ENCODE measurements at regions of chr7 and their contacts with region 1.

Region 1: GRCh38 chr7:150668472-150668911 is 17.0 kb upstream of the GIMAP2 start:
- DNase-seq: peak; percentile 67
- H3K4me3 Mint-ChIP-seq: peak overlapping the region; percentile 31
- H3K27ac Mint-ChIP-seq: peak overlapping the region; percentile 92
- H3K4me1 Mint-ChIP-seq: peaks cover 71% of the 10 kb centered on the region
- H3K27me3 Mint-ChIP-seq: no peaks in the 10 kb centered on the region

Region 2: DNA sequence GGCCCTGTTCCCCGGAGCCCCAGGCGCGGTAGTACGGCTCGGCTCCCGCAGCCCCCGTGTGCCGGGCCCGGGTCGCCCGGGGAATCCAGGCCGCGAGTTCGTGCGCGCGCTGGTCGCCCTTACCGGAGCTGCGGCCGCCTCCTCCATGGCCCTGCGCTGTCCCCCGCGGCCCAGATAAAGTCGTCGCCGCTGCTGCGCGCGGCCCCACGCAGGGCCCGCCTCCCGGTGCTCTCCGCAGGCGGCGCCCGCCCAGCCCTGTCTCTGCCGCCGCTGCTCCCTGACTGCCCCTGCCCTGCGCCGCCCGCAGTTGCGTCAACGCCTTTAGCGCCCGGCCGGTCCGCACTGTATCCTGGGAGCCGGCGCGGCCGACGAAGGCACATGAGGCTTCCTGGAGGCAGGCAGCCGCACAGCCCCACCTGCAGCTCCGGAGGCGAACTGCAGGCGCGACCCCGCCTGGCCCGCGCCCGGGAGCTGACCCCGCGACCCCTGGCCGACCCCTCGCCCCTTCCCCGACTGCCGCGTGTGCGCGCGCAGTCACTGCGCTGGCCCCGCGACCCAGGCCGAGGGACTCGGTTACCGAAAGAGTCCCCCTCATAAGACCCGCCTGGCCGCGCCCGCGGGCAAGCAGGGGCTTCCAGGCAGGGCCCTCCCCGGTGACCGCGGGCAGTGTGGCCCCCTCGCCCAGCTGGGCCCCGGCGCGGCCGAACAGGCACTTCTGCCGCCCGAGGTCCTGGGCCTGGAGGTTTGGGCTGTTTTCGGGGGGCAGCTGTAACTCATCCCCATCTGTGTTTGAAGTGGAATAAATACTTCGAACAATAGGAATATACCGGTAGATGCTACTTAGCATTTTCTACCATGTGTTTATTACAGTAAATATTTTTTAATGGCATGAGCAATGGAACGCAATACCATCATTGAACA is 1043.8 kb before region 1 on chr7:
- intact Hi-C with region 1: no loop called
- DNase-seq: peak; percentile 92
- H3K4me3 Mint-ChIP-seq: peak overlapping the region; percentile 87
- H3K27ac Mint-ChIP-seq: peak overlapping the region; percentile 87
- H3K4me1 Mint-ChIP-seq: peaks cover 38% of the 10 kb centered on the region
- H3K27me3 Mint-ChIP-seq: peaks cover 7% of the 10 kb centered on the region

Region 3: DNA sequence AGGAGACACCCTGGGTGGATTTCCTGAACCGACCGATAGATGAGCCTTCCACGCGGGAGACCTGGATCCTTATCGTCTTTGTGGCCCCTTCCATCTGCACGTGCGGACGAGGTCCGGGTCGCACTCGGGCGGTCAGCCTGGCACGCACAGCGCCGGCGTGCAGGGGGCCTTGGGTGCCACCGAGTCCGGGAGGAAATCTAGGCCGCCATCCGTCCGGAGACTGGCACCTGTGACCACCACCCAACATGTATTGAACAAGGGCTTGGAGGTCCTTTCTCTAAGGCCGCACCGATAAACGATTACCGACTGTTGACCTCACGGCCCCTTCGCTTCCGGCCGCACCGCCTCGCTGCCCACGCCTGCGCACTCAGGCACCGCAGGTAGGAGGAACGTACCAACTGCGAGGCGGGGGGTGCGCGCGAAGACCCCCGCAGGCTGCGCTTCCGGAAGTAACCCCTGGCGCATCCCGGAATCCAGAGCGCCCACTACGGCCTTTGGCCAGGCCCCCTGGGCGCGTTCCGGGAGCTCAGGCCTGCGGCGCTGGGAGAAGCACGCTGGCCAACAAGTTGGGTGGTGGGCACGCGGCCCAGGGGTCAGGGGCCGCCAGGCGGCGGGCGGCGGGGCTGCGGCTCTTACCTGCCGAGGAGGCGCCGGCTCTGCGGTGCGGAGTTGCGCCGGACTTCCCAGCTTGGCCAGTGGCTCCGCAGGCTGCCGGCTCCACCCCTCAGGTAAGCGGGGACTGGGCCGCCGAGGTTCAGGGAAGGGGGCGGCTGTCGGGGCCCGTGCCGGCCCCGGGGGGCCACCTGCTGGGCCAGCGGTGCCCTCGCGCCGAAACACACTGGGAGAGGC is 345.4 kb before region 1 on chr7 and contains the starts of genes ACTR3C and LRRC61:
- intact Hi-C with region 1: loop called (anchors 2 kb)
- DNase-seq: peak; percentile 57
- H3K4me3 Mint-ChIP-seq: peak within 1 kb of the TSS; percentile 97
- H3K27ac Mint-ChIP-seq: peak within 1 kb of the TSS; percentile 99
- H3K4me1 Mint-ChIP-seq: peaks cover 47% of the 10 kb centered on the region
- H3K27me3 Mint-ChIP-seq: no peaks in the 10 kb centered on the region
- total RNA-seq, gene ACTR3C: 7.0 and 7.9 TPM in 2 replicates
- total RNA-seq, gene LRRC61: 22.7 and 25.8 TPM in 2 replicates

Region 4: GRCh38 chr7:150514748-150515222 is 153.7 kb before region 1 on chr7 and contains the start of gene GIMAP7:
- intact Hi-C with region 1: loop called (anchors 5 kb)
- DNase-seq: peak; percentile 63
- H3K4me3 Mint-ChIP-seq: peak within 1 kb of the TSS; percentile 89
- H3K27ac Mint-ChIP-seq: peak within 1 kb of the TSS; percentile 89
- H3K4me1 Mint-ChIP-seq: peaks cover 45% of the 10 kb centered on the region
- H3K27me3 Mint-ChIP-seq: no peaks in the 10 kb centered on the region
- total RNA-seq, gene GIMAP7: 22.6 and 24.1 TPM in 2 replicates

Region 5: DNA sequence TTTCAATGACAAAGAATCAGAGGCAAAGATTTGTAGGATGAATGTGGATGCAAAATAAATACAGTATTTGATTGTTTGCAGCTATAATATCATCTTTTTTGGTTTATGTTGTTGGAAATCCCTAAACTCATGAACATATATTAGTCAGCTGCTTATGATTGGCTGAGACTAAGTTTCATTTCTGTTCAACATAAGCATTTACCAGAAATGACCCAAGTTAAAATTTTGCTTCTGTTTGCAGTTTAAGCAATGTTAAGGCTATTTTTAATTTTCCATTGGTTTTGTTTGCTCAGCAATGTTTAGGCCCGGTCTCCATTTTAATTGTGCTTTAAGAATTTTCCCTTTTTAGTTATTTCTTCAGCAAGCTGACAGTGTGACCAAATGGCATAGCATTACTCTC is 58.3 kb before region 1 on chr7:
- intact Hi-C with region 1: loop called (anchors 10 kb)
- DNase-seq: no peak
- H3K4me3 Mint-ChIP-seq: no peak overlapping the region
- H3K27ac Mint-ChIP-seq: peak overlapping the region; percentile 69
- H3K4me1 Mint-ChIP-seq: peaks cover 47% of the 10 kb centered on the region
- H3K27me3 Mint-ChIP-seq: no peaks in the 10 kb centered on the region

Region 6: GRCh38 chr7:150716368-150716767 is 47.9 kb after region 1 on chr7 and contains the start of gene GIMAP1:
- intact Hi-C with region 1: loop called (anchors 1 kb)
- DNase-seq: peak; percentile 48
- H3K4me3 Mint-ChIP-seq: peak within 1 kb of the TSS; percentile 94
- H3K27ac Mint-ChIP-seq: peak within 1 kb of the TSS; percentile 76
- H3K4me1 Mint-ChIP-seq: peaks cover 51% of the 10 kb centered on the region
- H3K27me3 Mint-ChIP-seq: no peaks in the 10 kb centered on the region
- total RNA-seq, gene GIMAP1: 3.9 and 4.5 TPM in 2 replicates

Region 7: DNA sequence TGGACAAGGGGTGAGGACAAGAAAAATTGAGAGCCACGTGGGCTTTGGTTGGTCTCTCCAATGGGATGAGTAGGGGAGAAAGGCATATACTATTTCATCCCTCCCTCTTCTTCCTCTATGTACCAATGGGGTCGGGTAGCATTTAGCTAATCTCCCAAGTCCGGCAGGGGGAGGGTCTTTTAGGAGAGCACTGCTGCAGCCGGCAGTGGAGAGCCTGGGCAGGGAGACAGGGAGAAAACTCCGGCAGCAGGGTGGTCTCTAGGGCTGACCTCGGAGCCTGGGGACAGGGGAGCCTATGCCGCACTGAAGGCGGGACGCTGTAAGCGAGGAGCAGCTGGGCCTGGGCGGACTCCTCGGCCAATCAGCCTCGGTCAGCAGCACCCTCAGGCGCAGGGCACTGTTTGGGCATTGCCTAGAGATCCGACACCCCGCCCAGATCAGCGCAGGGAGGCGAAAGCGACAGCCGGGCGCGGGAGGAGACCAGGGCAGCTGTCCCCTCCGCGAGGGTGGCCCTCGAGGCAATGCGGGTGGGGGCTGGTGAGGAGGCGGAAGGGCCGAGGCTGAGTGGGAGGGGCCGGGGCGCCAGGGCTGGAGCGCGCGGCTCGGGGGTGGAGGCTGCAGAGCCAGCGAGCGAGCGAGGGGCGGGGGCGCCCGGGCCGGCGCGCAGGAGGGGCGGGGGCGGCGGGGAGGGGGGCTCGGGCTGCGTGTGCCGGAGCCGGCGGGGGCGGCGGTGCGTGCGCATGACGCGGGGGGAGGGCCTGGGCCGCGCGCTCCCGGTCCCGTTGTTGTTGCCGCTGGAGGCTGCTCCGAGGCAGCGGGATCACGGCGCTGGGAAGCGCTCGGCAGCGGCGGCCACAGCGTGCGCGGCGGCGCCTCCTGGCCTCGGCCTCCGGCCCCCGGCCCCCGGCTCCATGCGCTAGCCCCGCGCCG is 417.5 kb after region 1 on chr7 and contains the start of gene AGAP3:
- intact Hi-C with region 1: loop called (anchors 5 kb)
- DNase-seq: peak; percentile 46
- H3K4me3 Mint-ChIP-seq: peak within 1 kb of the TSS; percentile 87
- H3K27ac Mint-ChIP-seq: peak within 1 kb of the TSS; percentile 79
- H3K4me1 Mint-ChIP-seq: peaks cover 24% of the 10 kb centered on the region
- H3K27me3 Mint-ChIP-seq: peaks cover 8% of the 10 kb centered on the region
- total RNA-seq, gene AGAP3: 62.5 and 64.4 TPM in 2 replicates